ENCODE measurements at regions of chr16 and their contacts with region 1.

Region 1: DNA sequence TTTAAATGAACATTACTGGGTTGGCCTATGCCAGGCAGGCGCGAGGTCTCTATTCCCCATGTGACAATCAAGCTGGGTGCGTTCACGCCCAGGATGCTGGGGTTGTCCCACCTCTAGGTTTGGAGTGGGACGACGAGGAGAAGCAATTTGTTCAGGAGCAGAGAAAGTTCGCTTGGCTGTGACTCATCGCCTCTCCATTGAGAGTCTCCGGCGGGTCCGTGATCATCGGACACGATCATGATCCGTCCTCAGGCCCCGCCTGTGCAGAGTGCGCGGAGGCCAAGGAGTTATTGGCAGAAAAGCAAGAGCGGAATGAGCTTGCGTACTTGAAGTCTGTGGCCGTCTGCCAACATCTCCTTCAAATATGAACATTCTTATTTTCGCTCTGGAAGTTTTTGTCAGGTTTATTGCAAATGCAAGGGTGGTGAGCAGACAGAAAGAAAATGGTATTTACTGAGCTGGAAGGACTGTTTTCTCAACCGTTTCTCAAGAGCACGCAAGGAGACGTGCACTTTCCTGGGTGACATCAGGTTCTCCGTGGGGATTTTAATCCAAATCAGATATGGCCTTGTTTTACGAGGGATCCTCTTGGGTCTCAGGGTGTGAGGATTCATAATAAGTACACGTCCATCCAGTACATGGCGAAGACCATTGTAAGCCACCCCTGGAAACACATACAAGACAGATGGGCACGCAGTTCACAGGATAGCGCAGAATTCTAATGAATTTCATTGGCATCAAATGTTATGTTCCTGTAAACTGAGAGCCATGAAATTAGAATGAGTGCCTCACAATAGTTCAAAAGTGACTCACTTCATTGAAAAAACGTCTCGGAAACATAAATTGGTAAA is 70.1 kb upstream of the CREBBP start:
- DNase-seq: no peak
- ATAC-seq: no peak
- H3K4me3 Mint-ChIP-seq: no peak overlapping the region
- H3K27ac Mint-ChIP-seq: no peak overlapping the region
- H3K4me1 Mint-ChIP-seq: peaks cover 4% of the 10 kb centered on the region
- H3K27me3 Mint-ChIP-seq: peaks cover 39% of the 10 kb centered on the region

Region 2: GRCh38 chr16:3729161-3730112 is 221.1 kb before region 1 on chr16:
- CTCF ChIA-PET with region 1: no interaction called
- DNase-seq: no peak
- ATAC-seq: no peak
- H3K4me3 Mint-ChIP-seq: no peak overlapping the region
- H3K27ac Mint-ChIP-seq: no peak overlapping the region
- H3K4me1 Mint-ChIP-seq: no peaks in the 10 kb centered on the region
- H3K27me3 Mint-ChIP-seq: no peaks in the 10 kb centered on the region

Region 3: GRCh38 chr16:3907586-3907985 is 43.0 kb before region 1 on chr16:
- CTCF ChIA-PET with region 1: no interaction called
- DNase-seq: no peak
- ATAC-seq: no peak
- H3K4me3 Mint-ChIP-seq: no peak overlapping the region
- H3K27ac Mint-ChIP-seq: no peak overlapping the region
- H3K4me1 Mint-ChIP-seq: no peaks in the 10 kb centered on the region
- H3K27me3 Mint-ChIP-seq: peaks cover 3% of the 10 kb centered on the region

Region 4: DNA sequence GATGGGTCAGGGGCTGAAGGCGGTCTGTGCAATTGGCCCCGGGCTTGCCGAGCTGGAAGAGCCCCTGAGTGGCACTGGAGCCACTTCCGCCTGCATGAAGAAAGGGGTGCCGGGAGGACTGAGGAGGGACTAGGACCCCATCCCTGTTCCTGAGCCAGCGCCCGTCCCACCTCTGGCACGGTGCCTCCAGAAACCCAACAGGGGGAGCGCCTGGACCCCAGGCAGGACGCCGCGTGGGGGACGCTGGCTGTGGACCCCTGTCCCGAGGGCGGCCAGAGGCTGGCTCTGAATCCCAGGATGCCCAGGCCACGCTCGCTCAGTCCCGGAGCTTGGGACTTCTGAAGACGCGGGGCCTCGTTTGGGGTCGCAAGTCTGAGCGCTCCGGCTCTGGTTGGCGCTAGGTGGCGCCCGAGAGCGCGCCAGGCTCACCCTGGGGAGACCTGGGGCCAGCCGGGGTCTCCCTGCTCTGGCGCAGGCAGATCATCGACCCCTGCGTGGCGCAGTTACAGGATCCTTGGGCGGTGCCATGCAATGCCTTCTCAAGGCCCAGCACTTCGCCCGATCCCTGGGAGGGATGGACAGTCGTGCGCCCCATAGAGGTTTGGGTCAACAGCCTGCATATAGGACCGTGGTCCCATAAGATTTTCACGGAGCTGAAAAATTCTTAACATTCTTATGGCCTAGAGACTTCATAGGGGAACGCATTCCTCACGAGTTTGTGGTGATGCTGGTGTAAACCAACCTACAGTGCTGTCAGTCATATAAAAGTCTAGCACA is 11.5 kb before region 1 on chr16:
- CTCF ChIA-PET with region 1: interaction called, 14 read pairs
- DNase-seq: peak; percentile 59
- ATAC-seq: peak; percentile 88
- H3K4me3 Mint-ChIP-seq: no peak overlapping the region
- H3K27ac Mint-ChIP-seq: no peak overlapping the region
- H3K4me1 Mint-ChIP-seq: peaks cover 3% of the 10 kb centered on the region
- H3K27me3 Mint-ChIP-seq: no peaks in the 10 kb centered on the region

Region 5: DNA sequence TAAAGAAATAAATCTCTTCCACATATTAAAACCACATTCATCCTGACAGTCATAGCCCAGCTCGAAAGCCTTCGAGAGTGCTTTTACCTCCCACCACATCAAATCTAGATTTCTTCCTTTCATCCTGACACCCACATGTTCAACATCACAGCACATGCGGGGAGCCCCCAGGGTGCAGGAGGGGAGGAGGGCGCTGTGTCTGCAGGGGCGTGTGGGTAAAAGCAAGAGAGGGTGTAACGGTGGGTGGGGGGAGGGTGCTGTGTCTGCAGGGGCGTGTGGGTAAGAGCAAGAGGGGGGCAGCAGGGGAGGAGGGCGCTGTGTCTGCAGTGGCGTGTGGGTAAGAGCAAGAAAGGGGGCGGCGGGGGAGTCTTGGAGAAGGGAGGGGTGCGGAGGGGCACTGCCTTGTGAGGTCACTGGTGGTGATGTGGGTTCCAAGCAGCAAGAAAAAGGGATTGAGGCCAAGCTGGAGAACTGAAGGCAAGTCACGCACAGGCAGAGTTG is 131.0 kb after region 1 on chr16:
- CTCF ChIA-PET with region 1: no interaction called
- DNase-seq: peak; percentile 45
- ATAC-seq: peak; percentile 14
- H3K4me3 Mint-ChIP-seq: peak overlapping the region; percentile 42
- H3K27ac Mint-ChIP-seq: peak overlapping the region; percentile 71
- H3K4me1 Mint-ChIP-seq: peaks cover 45% of the 10 kb centered on the region
- H3K27me3 Mint-ChIP-seq: no peaks in the 10 kb centered on the region

Region 6: DNA sequence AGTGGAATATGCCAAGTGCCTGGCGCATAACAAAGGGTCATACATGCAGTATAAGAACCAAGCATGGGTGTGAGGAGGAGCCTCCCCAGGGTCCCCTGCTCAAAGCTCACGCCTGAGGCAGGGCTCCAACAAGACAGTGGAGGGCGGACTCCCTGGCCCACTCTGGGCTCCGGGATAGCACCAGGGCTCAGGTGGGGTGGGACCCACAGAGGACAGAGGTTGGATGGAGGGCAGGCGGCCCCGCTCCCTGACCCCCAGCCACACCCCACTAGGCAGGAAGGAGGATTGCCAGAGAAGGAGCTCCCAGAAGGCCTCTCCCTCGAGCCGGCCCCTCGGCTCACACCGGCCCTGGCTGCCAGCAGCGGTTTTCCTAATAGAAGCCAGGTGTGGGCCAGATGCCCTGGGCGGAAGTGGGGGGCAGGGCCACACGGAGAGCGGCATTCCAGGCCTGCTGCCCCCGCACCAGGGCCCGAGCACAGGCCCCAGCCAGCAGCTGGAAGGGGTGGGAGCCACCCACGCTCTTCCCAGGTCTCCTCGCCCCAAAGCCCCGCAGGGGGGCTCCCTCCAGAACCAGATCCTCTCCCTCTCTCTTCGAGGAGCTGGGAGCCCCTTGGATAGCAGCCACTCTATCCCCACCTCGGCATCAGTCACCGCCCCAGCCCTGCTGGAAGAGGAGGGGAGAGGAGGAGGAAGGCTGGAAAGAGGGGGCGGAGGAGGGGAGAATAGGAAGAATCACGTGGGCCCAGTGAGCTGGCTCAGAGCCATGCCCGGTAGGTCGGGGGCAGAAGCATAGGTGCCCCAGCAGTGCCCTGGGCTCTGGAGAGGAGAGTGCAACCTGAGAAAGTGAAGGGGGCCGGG is 442.0 kb after region 1 on chr16:
- CTCF ChIA-PET with region 1: no interaction called
- DNase-seq: no peak
- ATAC-seq: no peak
- H3K4me3 Mint-ChIP-seq: no peak overlapping the region
- H3K27ac Mint-ChIP-seq: no peak overlapping the region
- H3K4me1 Mint-ChIP-seq: peaks cover 3% of the 10 kb centered on the region
- H3K27me3 Mint-ChIP-seq: no peaks in the 10 kb centered on the region